ENCODE measurements at regions of chr14 and their contacts with region 1.

Region 1: DNA sequence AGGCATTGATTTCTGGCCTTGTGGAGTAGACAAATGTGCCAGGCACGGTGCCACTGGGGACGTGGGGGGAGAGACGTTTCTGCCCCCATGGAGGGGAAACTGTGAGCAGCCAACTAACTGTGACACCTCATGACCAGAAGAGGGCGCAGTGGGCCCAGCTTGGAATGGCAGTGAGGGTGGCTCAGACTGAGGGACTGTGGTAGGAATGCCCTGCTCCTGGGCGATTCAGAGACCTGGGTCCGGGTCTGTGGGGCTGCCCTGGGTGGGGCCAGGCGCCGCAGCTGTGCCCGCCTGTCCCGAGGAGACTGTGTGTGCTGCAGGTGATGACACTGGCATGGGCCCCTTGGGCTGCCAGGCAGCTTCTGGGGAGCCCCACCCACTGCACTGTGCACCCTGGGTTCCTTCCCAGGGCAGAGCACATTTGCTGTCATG is 60.6 kb downstream of the SLC25A47 start:
- DNase-seq: peak; percentile 84
- H3K4me3 ChIP-seq: no peak overlapping the region
- H3K27ac ChIP-seq: peak overlapping the region; percentile 34
- H3K4me1 ChIP-seq: peaks cover 41% of the 10 kb centered on the region
- H3K27me3 ChIP-seq: no peaks in the 10 kb centered on the region
- CTCF ChIP-seq: peak; percentile 89

Region 2: GRCh38 chr14:100305324-100306100 is 78.2 kb before region 1 on chr14:
- CTCF ChIA-PET with region 1: no interaction called
- POLR2A ChIA-PET with region 1: no interaction called
- intact Hi-C with region 1: loop called (anchors 2 kb)
- DNase-seq: peak; percentile 31
- H3K4me3 ChIP-seq: peak overlapping the region; percentile 91
- H3K27ac ChIP-seq: peak overlapping the region; percentile 90
- H3K4me1 ChIP-seq: peaks cover 19% of the 10 kb centered on the region
- H3K27me3 ChIP-seq: no peaks in the 10 kb centered on the region
- CTCF ChIP-seq: no peak

Region 3: GRCh38 chr14:100645192-100645990 is 261.6 kb after region 1 on chr14:
- CTCF ChIA-PET with region 1: interaction called, 75 read pairs
- POLR2A ChIA-PET with region 1: no interaction called
- intact Hi-C with region 1: loop called (anchors 1 kb)
- DNase-seq: peak; percentile 93
- H3K4me3 ChIP-seq: no peak overlapping the region
- H3K27ac ChIP-seq: no peak overlapping the region
- H3K4me1 ChIP-seq: no peaks in the 10 kb centered on the region
- H3K27me3 ChIP-seq: no peaks in the 10 kb centered on the region
- CTCF ChIP-seq: peak; percentile 85

Region 4: GRCh38 chr14:100828031-100828769 is 444.5 kb after region 1 on chr14:
- CTCF ChIA-PET with region 1: no interaction called
- POLR2A ChIA-PET with region 1: no interaction called
- intact Hi-C with region 1: loop called (anchors 5 kb)
- DNase-seq: no peak
- H3K4me3 ChIP-seq: peak overlapping the region; percentile 57
- H3K27ac ChIP-seq: no peak overlapping the region
- H3K4me1 ChIP-seq: peaks cover 12% of the 10 kb centered on the region
- H3K27me3 ChIP-seq: no peaks in the 10 kb centered on the region
- CTCF ChIP-seq: peak; percentile 25; the same call in 1 of the 2 replicates

Region 5: DNA sequence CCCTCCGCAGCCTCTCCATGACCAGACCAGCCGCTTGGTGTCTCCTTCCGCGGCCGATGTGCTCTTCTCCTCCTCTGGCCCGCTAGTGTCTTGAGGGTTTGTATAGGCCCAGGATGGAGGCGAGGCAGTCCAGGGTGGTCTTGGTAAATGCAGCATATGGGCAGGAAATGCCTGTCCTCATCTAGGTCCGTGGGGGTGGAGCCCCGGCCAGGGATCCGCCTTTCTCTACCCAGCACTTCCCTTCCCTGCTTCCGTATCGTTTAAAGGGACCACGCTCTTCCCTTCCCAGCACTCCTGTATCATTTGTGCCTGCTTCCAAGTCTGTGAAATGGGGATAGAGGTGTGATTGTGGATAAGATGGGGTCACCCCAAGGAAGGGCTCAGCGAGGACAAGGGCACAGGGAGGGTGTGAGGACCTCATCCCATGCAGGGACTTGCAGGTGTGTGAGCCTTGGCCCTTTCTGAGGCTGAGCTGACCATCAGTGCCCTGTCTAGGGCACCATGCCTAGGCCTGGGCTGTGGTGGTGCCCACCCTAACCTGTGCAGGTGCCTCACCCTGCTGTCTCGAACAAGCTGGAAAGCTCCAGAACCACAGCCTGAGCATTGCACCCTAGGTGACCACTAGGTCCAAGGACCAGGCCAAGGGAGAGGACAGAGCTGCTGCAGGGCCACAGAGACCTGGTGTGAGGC is 846.6 kb after region 1 on chr14:
- CTCF ChIA-PET with region 1: no interaction called
- POLR2A ChIA-PET with region 1: no interaction called
- intact Hi-C with region 1: loop called (anchors 5 kb)
- DNase-seq: no peak
- H3K4me3 ChIP-seq: no peak overlapping the region
- H3K27ac ChIP-seq: no peak overlapping the region
- H3K4me1 ChIP-seq: no peaks in the 10 kb centered on the region
- H3K27me3 ChIP-seq: no peaks in the 10 kb centered on the region
- CTCF ChIP-seq: no peak

Measured in A673 (cell line).